ENCODE measurements at regions of chr6 and their contacts with region 1.

Region 1: DNA sequence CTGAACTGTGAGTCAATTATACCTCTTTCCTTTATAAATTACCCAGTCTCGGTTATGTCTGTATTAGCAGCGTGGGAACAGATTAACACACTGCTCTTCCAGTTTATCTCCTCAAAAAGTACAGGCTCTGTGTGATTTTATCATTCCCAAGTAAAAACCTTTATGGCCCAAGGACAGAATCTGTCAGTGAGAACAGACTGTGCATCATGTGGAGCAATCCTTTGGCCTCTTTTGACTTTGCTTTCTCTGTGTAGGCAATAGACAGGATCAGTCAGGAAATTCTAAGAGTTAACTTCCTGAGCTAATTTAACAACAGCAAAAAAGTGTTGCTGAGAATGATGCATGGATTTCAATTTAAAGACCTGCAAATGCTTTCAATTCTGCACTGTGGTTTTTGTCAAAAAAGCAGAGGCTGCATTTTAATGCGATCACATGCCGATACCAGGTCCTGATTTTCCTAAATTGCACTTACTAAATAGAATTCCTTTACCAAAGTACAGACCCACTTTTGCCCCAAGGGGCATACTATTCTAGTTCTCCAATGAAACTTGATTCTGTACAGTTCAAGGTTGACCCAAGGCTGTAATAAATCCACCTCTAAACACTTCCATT is 246.7 kb upstream of the MARCKS start:
- DNase-seq: no peak
- H3K4me3 ChIP-seq: no peak overlapping the region
- H3K27ac ChIP-seq: no peak overlapping the region
- H3K4me1 ChIP-seq: no peaks in the 10 kb centered on the region
- CTCF ChIP-seq: no peak

Region 2: GRCh38 chr6:113626475-113626874 is 16.0 kb after region 1 on chr6:
- CTCF ChIA-PET with region 1: no interaction called
- POLR2A ChIA-PET with region 1: interaction called, 10 read pairs
- intact Hi-C with region 1: no loop called
- DNase-seq: peak; percentile 24
- H3K4me3 ChIP-seq: no peak overlapping the region
- H3K27ac ChIP-seq: no peak overlapping the region
- H3K4me1 ChIP-seq: peaks cover 58% of the 10 kb centered on the region
- CTCF ChIP-seq: no peak; the same call in 1 of the 2 replicates

Measured in OCI-LY7 (cell line).